Activated CD8-positive, alpha-beta memory T cell treated with anti-CD3 and anti-CD28 coated beads, Interleukin-2, amount 10 ng/mL, durations not matched to agents 7 days and 5 days (primary cell): ENCODE measurements at regions of chr3 and their contacts with region 1.

Region 1: GRCh38 chr3:128804017-128804810 is 75.2 kb upstream of the ACAD9 start:
- DNase-seq: peak; percentile 84
- ATAC-seq: peak; percentile 88
- H3K4me3 Mint-ChIP-seq: peak overlapping the region; percentile 69
- H3K27ac Mint-ChIP-seq: peak overlapping the region; percentile 84
- H3K4me1 Mint-ChIP-seq: peaks cover 71% of the 10 kb centered on the region
- H3K27me3 Mint-ChIP-seq: no peaks in the 10 kb centered on the region

Region 2: DNA sequence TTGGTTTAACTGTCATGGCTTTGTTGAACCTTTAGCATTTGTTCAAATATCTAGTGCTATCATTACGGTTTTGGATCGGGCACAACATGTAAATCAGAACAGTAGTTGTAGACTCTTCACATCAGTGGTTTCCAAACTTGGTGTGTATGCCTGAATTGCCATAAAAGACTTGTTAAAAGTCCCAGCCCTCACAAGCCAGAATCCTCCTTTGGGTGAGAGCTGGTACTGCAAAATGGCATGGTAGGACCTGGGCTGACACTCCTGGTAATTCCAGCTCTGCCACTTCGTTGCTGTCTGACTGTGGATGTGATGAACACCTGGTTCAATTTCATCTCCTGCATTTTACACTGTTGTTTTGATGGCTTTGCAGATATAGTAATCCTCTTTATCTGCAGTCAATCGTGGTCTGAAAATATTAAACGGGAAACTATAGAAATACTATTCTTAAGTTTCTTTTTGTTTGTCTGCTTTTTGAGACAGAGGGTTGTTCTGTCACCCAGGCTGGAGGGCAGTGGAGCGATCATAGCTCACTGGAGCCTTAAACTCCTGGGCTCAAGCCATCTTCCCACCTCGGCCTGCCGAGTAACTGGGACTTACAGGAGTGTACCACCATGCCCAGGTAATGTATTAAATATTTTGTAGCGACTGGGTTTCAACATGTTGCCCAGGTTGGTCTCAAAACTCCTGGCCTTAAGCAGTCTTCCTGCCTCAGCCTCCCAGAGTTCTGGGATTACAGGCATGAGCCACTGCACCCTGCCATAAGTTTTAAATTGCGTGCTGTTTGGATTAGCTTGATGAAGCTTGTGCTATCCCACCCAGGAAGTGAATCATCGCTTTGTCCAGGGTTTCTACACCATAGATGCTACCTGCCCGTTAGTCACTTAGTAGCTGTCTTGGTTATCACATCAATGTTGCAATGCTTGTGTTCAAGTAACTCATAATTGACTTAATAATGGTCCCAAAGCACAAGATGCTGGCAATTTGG is 16.7 kb before region 1 on chr3:
- CTCF ChIA-PET with region 1: interaction called, 41 read pairs
- DNase-seq: peak; percentile 69
- ATAC-seq: peak; percentile 67
- H3K4me3 Mint-ChIP-seq: peak overlapping the region; percentile 70
- H3K27ac Mint-ChIP-seq: peak overlapping the region; percentile 92
- H3K4me1 Mint-ChIP-seq: peaks cover 66% of the 10 kb centered on the region
- H3K27me3 Mint-ChIP-seq: no peaks in the 10 kb centered on the region

Region 3: GRCh38 chr3:128845778-128846485 is 41.7 kb after region 1 on chr3:
- CTCF ChIA-PET with region 1: interaction called, 11 read pairs
- DNase-seq: peak; percentile 91
- ATAC-seq: peak; percentile 81
- H3K4me3 Mint-ChIP-seq: peak overlapping the region; percentile 59
- H3K27ac Mint-ChIP-seq: peak overlapping the region; percentile 80
- H3K4me1 Mint-ChIP-seq: peaks cover 13% of the 10 kb centered on the region
- H3K27me3 Mint-ChIP-seq: no peaks in the 10 kb centered on the region